ENCODE measurements at regions of chr15 and their contacts with region 1.

Region 1: GRCh38 chr15:64019764-64020163 is 26.5 kb downstream of the DAPK2 start:
- DNase-seq: peak; percentile 29 to 57
- ATAC-seq: peak; percentile 62 to 89 (median 84)
- H3K4me3 ChIP-seq: no peak overlapping the region
- H3K27ac ChIP-seq: peak overlapping the region; percentile 3 to 78 (median 74)
- H3K4me1 ChIP-seq: peaks cover 0 to 89% (median 51%) of the 10 kb centered on the region in 9 donors
- H3K27me3 ChIP-seq: no peaks in the 10 kb centered on the region
- CTCF ChIP-seq: no peak

Region 2: DNA sequence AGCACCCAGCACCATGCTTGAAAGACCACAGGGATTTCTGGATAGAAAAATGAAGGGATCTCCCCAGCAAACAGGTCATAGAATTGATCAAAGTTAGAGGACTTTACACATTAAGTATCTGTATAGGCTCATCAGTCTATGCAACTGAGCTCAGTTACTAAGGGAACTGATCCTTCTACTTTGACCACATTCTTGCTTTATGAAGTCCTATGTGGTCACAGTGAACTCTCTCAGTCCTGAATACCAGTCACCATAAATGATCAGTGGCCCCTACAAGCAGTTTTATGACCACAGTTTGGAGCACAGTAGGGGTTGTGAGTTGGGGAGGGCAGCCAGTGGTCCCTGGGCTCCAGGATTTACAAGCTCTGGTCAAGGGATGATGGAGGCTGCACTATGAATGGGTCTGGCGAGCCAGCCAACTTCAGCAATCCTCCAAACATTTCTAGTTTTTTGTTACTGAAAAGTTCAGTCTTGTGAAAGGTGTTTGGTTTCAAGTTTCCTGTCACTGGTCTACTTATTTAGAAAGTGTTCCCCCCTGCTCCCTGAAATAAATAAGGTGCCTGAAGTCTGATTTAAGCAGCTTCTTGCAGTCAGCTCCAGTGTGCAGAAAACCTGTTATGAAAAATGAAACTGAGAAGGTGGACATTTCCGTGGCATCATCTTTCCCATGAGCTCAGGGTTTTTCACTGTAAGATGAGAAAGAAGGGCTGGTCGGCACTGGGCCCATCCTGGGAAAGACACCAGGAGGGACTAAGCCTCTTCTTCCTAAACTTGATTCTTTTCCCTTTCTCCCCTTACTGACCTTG is 48.9 kb before region 1 on chr15:
- intact Hi-C with region 1: loop called in 1 of 10 experiments (anchors 5 kb)
- DNase-seq: no peak
- ATAC-seq: no peak
- H3K4me3 ChIP-seq: no peak overlapping the region
- H3K27ac ChIP-seq: peak overlapping the region; percentile 29 to 85 (median 78)
- H3K4me1 ChIP-seq: peaks cover 11 to 69% (median 60%) of the 10 kb centered on the region in 9 donors
- H3K27me3 ChIP-seq: no peaks in the 10 kb centered on the region
- CTCF ChIP-seq: no peak

Region 3: DNA sequence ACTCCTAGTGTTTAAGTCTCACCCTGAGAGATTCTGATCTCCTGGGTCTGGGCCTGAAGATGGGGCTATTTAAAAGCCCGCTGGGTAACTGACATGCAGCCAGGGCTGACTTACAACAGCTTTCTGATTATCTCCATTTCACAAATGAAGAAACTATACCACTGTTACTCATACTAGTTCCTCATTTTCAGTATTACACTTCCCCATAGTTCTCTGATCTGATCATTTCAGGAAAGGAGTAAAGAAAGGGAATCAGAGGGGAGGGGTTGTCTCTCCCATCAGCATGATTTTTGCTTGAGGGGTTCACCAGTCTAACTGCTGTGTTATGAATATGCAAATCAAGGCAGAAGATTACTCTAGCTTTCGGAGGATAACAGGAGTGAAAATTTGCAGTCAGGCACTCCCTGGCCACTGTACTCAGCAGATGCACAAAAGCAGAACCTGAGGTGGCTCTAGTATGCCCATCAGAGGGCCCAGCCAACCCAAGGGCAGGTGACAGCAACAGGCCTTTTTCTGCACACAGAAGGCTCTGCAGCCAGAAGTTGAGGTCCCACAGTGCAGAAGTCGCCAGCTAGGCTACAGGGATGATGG is 32.9 kb before region 1 on chr15:
- intact Hi-C with region 1: loop called in 1 of 10 experiments (anchors 5 kb)
- DNase-seq: no peak
- ATAC-seq: no peak
- H3K4me3 ChIP-seq: no peak overlapping the region
- H3K27ac ChIP-seq: peak overlapping the region; percentile 76 to 91 (median 88)
- H3K4me1 ChIP-seq: peaks cover 43 to 88% (median 79%) of the 10 kb centered on the region in 9 donors
- H3K27me3 ChIP-seq: no peaks in the 10 kb centered on the region
- CTCF ChIP-seq: no peak

Region 4: DNA sequence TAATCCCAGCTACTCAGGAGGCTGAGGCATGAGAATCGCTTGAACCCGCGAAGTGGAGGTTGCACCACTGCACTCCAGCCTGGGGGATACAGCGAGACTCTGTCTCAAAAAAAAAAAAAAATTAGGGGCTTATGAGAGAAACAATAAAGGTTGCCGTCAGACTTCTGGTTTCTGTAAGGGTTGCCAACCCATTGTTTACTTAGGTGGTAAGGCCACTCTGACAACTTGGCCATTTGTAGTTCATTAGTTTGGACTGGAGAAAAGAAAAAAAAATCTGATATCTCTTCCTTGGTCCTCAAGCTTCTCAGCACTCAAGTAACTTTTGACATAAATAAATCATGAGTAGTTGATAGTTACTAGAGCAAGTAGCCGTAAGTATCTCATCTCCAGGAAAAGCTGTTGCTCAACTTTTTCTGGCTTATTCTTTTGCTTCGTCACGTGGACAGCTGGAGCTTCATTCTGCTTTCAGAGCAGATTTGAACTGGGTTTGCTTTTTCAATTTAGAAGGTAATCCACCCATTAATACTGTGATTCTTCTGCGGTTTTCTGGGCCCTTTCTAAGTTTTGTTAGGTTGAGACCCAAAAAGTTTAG is 85.4 kb after region 1 on chr15:
- intact Hi-C with region 1: no loop called
- DNase-seq: no peak
- ATAC-seq: peak; percentile 31 to 87 (median 66)
- H3K4me3 ChIP-seq: no peak overlapping the region
- H3K27ac ChIP-seq: peak overlapping the region in 9 of 10 donors; percentile 25 to 82 (median 48)
- H3K4me1 ChIP-seq: peaks cover 0 to 96% (median 52%) of the 10 kb centered on the region in 9 donors
- H3K27me3 ChIP-seq: no peaks in the 10 kb centered on the region
- CTCF ChIP-seq: no peak

Region 5: DNA sequence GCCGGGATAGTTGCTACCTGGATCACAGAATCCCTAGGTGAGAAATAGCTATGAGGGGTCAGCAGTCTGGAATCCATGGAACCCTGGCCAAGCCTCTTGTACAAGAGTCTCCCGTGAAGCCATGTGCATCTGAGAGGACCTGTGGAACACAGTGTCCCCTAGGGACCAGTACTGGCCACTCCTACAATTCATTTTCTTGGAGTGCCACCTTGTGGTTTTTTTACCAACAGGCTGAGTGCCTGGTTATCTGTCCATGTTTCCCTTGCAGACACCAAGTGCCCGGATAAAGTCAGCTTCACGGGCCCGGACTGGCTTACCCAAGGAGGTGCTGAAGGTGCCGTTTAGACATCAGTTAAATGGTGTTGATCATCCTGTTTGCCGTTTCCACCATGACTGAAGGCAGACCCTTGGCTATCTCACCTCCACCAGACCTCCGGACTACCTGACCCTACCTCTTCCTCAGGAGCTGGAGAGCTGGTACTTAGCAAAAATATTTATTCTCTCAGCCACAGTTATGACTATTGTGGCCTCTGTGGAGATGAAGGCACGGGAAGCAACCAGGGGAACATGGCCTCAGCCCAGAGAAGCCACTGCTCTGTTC is 661.8 kb after region 1 on chr15:
- intact Hi-C with region 1: no loop called
- DNase-seq: peak in 1 of 2 donors; percentile 54
- ATAC-seq: peak; percentile 54 to 87 (median 75)
- H3K4me3 ChIP-seq: no peak overlapping the region
- H3K27ac ChIP-seq: peak overlapping the region in 1 of 10 donors; percentile 24
- H3K4me1 ChIP-seq: peaks cover 3 to 45% (median 13%) of the 10 kb centered on the region in 9 donors
- H3K27me3 ChIP-seq: no peaks in the 10 kb centered on the region
- CTCF ChIP-seq: peak; percentile 27 to 84 (median 65)